Heart right ventricle (tissue), 16 donors: ENCODE measurements at regions of chr20 and their contacts with region 1.

Region 1: GRCh38 chr20:38221119-38221589 is 39.4 kb downstream of the KIAA1755 start:
- DNase-seq: peak; percentile 58 to 78
- ATAC-seq: peak; percentile 34 to 77 (median 64)
- H3K4me3 ChIP-seq: no peak overlapping the region
- H3K27ac ChIP-seq: no peak overlapping the region
- H3K4me1 ChIP-seq: peaks cover 0 to 22% (median 3%) of the 10 kb centered on the region in 9 donors
- H3K27me3 ChIP-seq: no peaks in the 10 kb centered on the region
- CTCF ChIP-seq: peak; percentile 82 to 94 (median 91)

Region 2: DNA sequence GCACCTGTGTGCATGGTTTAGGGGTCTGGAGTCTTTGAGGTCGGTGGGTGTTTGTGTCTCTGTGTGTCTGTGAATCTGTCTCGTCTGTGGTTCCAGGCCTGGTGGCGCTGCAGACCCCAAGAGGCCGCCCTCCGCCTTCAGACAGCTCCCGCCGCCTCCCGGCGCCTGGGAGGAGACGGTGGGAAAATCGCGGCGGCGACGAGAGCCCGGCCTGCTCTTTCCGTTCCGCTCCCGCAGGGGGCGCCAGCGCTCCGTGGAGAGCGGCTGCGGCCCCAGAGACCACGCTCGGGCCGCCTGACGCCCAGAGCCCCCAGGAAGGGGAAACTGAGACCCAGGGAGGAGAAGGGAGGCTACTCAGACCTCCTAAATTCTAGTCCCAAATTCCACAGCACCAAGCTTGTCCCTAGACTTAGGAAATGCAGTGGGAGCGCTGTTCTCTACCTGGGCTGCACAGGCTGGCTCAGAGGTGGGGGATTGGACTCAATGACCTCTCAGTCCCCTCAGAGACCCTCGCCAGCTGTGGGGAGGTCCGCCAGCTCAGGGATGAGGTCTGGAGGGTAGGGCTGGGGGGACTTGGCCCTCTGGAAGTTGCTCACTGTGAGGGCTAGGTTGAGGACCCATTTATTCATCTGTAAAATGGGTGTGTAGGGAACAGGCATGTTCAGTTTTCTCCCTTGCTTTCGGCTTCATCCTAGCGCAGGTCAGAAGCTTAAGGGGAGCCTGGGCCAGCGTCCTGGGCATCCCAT is 656.6 kb before region 1 on chr20:
- intact Hi-C with region 1: loop called (anchors 5 to 10 kb)
- DNase-seq: peak; percentile 16 to 49
- ATAC-seq: peak in 7 of 8 donors; percentile 50 to 81 (median 72)
- H3K4me3 ChIP-seq: no peak overlapping the region
- H3K27ac ChIP-seq: no peak overlapping the region
- H3K4me1 ChIP-seq: peaks cover 0 to 7% (median 5%) of the 10 kb centered on the region in 9 donors
- H3K27me3 ChIP-seq: peaks cover 0 to 83% (median 61%) of the 10 kb centered on the region in 7 donors
- CTCF ChIP-seq: peak; percentile 83 to 95 (median 91)

Region 3: GRCh38 chr20:37764333-37764935 is 456.7 kb before region 1 on chr20:
- intact Hi-C with region 1: loop called in 1 of 10 experiments (anchors 10 kb)
- DNase-seq: no peak
- ATAC-seq: no peak
- H3K4me3 ChIP-seq: no peak overlapping the region
- H3K27ac ChIP-seq: no peak overlapping the region
- H3K4me1 ChIP-seq: no peaks in the 10 kb centered on the region
- H3K27me3 ChIP-seq: no peaks in the 10 kb centered on the region
- CTCF ChIP-seq: no peak

Region 4: GRCh38 chr20:38057351-38057972 is 163.7 kb before region 1 on chr20:
- intact Hi-C with region 1: loop called (anchors 1 to 5 kb)
- DNase-seq: peak; percentile 83 to 86
- ATAC-seq: peak; percentile 87 to 95 (median 92)
- H3K4me3 ChIP-seq: no peak overlapping the region
- H3K27ac ChIP-seq: peak overlapping the region in 3 of 10 donors; percentile 10 to 60 (median 42)
- H3K4me1 ChIP-seq: peaks cover 0 to 39% (median 13%) of the 10 kb centered on the region in 9 donors
- H3K27me3 ChIP-seq: no peaks in the 10 kb centered on the region
- CTCF ChIP-seq: peak; percentile 82 to 98 (median 91)

Region 5: GRCh38 chr20:38173237-38174156 is 47.7 kb before region 1 on chr20:
- intact Hi-C with region 1: loop called in 8 of 10 experiments (anchors 5 kb)
- DNase-seq: peak in 1 of 2 donors; percentile 39
- ATAC-seq: peak in 5 of 8 donors; percentile 38 to 73 (median 43)
- H3K4me3 ChIP-seq: no peak overlapping the region
- H3K27ac ChIP-seq: no peak overlapping the region
- H3K4me1 ChIP-seq: peaks cover 2 to 40% (median 14%) of the 10 kb centered on the region in 9 donors
- H3K27me3 ChIP-seq: no peaks in the 10 kb centered on the region
- CTCF ChIP-seq: no peak

Region 6: GRCh38 chr20:38330638-38331037 is 109.5 kb after region 1 on chr20:
- intact Hi-C with region 1: no loop called
- DNase-seq: no peak
- ATAC-seq: no peak
- H3K4me3 ChIP-seq: no peak overlapping the region
- H3K27ac ChIP-seq: no peak overlapping the region
- H3K4me1 ChIP-seq: no peaks in the 10 kb centered on the region
- H3K27me3 ChIP-seq: peaks cover 0 to 35% (median 18%) of the 10 kb centered on the region in 7 donors
- CTCF ChIP-seq: no peak